ENCODE measurements at regions of chr3 and their contacts with region 1.

Region 1: DNA sequence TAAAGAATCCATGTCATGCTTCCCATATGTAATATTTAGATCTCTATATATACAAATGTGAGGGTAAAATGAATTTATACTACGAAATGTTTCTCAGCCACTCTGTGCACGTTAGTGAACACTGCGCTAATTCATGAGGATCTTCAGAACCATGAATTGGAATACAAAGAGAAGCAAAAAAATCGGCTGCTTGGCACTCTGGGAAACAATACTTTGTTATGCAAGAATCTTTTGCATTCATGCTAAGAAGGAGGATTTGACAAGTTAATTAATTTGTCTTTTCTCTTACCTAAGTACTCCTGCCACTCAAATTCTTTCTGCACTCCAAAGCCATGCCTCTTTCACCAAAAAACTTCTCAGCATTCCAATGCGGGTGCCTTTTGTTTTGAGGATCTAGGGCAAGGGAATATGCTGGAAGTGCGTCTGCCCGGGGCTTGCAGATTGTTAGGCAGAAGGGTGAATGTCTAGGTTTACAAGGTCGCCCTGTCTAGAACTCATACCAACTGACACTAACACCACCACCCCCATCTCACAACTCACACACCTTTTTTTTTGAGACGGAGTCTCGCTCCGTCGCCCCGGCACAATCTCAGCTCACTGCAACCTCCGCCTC is 11.3 kb upstream of the KAT2B start:
- DNase-seq: no peak
- H3K4me3 ChIP-seq: no peak overlapping the region
- H3K27ac ChIP-seq: no peak overlapping the region
- H3K4me1 ChIP-seq: peaks cover 13% of the 10 kb centered on the region
- H3K27me3 ChIP-seq: no peaks in the 10 kb centered on the region
- CTCF ChIP-seq: no peak

Region 2: DNA sequence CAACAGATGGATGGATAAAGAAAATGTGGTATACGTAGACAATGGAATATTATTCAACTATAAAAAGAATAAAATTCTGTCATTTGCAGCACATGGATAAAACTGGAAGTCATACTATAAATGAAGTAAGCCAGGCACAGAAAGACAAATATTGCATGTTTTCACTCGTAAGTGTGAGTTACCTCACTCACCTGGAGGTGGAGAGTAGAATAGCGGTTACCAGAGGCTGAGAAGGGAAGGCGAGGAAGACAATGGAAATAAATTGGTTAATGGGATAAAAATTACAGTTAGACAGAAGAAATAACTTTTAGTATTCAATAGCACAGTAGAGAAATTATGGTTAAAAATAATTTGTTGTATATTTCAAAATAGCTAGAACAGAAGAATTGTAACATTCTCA is 236.5 kb before region 1 on chr3:
- intact Hi-C with region 1: no loop called
- DNase-seq: no peak
- H3K4me3 ChIP-seq: no peak overlapping the region
- H3K27ac ChIP-seq: no peak overlapping the region
- H3K4me1 ChIP-seq: no peaks in the 10 kb centered on the region
- H3K27me3 ChIP-seq: no peaks in the 10 kb centered on the region
- CTCF ChIP-seq: no peak

Region 3: GRCh38 chr3:19972051-19972454 is 56.9 kb before region 1 on chr3:
- intact Hi-C with region 1: loop called (anchors 2 kb)
- DNase-seq: no peak
- H3K4me3 ChIP-seq: no peak overlapping the region
- H3K27ac ChIP-seq: no peak overlapping the region
- H3K4me1 ChIP-seq: peaks cover 41% of the 10 kb centered on the region
- H3K27me3 ChIP-seq: no peaks in the 10 kb centered on the region
- CTCF ChIP-seq: no peak

Measured in left ventricle myocardium inferior (tissue), 1 donor.